Activated naive CD8-positive, alpha-beta T cell treated with anti-CD3 and anti-CD28 coated beads, Interleukin-2, amount 10 ng/mL, durations not matched to agents 7 days and 5 days (primary cell): ENCODE measurements at regions of chr1 and their contacts with region 1.

Region 1: DNA sequence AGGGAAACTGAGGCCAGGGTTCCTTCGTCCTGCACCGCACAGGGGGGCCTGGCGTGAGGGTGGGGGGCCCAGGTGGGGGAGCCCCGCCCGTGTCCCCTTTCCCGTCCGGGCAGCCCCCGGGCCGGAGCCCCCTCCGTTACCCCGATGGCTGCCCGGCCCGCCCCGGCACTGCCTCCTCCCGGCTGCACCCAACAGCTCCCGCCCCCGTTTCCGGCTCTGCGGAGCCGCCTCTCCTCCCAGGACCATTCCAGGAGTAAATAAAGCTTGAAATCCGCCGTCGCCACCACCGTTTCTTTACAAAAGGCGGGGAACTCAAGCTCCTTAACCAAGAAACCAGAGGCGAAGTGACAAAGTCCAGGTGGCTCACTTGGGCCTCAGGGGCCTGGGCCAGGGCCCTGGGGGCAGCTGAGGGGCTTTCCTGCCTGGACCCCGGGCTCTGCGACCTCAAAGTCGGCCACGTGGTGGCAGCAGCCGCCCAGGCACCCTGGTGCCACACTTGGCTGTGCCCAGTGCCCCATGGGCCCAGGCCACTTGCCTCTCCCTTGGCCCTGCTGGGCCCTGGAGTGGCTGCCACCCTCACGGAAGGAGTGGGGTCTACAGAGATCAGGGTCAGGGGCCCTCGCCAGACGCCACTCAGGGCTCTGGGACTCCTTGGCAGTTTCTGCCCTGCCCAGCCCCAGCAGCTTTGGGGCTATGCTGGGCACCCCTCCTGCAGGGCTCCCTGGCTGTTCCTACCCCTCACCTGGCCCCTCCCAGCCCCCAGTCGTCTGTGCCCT is 514 bp upstream of the FAAP20 start:
- DNase-seq: peak; percentile 94
- ATAC-seq: peak; percentile 75
- H3K4me3 Mint-ChIP-seq: peak overlapping the region; percentile 84
- H3K27ac Mint-ChIP-seq: peak overlapping the region; percentile 92
- H3K4me1 Mint-ChIP-seq: peaks cover 18% of the 10 kb centered on the region
- H3K27me3 Mint-ChIP-seq: no peaks in the 10 kb centered on the region

Region 2: GRCh38 chr1:2205191-2205952 is 10.3 kb after region 1 on chr1:
- POLR2A ChIA-PET with region 1: interaction called, 17 read pairs
- DNase-seq: peak; percentile 95
- ATAC-seq: peak; percentile 79
- H3K4me3 Mint-ChIP-seq: peak overlapping the region; percentile 69
- H3K27ac Mint-ChIP-seq: no peak overlapping the region
- H3K4me1 Mint-ChIP-seq: peaks cover 3% of the 10 kb centered on the region
- H3K27me3 Mint-ChIP-seq: no peaks in the 10 kb centered on the region

Region 3: DNA sequence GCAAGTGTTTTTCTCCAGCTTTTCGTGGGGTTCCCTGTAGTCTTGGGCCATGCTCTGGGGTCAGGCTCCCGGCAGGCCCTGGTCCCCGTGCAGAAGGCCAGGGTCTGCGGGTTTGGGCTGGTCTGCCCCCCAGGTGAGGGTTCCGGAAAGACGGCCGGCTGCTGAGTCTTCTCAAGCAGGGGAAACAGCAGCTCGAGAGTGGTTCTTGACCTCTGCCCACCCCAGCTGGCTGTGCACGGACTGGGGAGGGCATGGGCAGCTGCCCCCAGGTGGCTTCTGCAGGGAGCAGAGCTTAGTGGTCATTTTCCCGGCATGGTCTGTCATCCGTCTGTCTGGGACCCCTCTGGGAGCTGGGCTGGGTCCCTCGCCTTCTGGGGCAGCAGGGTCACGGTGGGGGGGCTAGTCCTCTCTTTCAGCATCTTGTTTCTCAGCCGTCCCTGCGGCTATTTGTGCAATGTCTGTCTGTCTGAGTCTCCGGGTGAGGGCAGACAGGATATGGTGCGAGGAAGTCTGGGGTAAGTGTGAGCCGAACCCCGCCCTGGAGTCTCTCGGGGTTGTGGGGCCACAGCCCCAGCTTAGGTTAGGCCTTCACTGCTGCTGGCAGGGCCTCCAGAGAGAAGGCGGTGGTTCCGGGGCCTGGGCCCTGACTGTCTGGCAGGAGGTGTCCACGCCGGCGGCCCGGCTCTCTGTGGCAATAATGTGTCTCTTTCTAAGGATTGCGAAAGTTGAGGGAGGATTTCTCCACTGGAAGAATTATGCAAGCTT is 39.1 kb after region 1 on chr1:
- POLR2A ChIA-PET with region 1: interaction called, 15 read pairs
- DNase-seq: peak; percentile 74
- ATAC-seq: peak; percentile 81
- H3K4me3 Mint-ChIP-seq: peak overlapping the region; percentile 83
- H3K27ac Mint-ChIP-seq: peak overlapping the region; percentile 88
- H3K4me1 Mint-ChIP-seq: peaks cover 55% of the 10 kb centered on the region
- H3K27me3 Mint-ChIP-seq: no peaks in the 10 kb centered on the region

Region 4: GRCh38 chr1:2255420-2256369 is 60.6 kb after region 1 on chr1:
- POLR2A ChIA-PET with region 1: no interaction called
- DNase-seq: peak; percentile 65
- ATAC-seq: peak; percentile 67
- H3K4me3 Mint-ChIP-seq: no peak overlapping the region
- H3K27ac Mint-ChIP-seq: no peak overlapping the region
- H3K4me1 Mint-ChIP-seq: peaks cover 26% of the 10 kb centered on the region
- H3K27me3 Mint-ChIP-seq: no peaks in the 10 kb centered on the region

Region 5: DNA sequence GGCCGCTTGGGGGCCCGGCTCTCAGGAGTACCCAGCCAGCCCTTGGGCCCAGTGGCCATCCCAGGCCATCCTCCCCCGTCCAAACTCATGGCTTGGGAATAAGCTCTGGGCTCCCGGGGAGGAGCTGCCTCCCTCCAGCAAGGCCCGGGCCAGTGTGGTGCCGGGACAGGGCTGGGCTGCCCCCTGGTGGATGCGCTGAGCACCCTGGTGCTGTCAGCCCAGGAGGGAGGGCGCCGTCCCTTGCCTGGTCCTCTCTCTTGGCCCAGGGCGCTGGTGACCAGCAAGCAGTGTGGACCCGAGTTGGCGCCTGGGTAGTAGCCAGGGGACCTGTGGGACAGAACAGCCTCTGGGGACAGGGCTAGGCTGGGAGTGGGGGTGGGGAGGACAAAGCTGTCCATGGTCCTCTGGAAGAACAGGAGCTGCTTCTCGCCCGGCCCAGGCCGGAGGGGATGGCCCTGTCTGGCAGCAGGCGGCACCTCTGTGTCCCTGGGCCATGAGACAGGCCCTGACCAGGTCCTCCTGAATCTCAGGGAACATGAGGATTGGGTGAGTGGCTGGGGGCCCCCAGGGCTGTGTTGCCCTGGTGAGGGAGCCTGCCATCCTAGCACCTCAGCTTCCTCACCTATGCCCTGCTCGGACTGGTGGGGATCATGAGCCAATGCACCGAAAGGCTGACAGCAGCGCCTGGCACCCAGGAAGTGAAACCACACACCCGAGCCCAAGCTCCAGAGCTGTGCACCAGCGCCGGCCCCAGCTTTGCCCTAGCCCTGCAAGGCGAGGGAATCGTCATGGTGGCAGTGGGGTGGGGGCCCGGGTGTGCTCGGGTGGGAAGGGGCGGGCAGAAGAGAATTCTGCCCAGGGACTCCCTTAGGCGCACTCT is 186.9 kb after region 1 on chr1:
- POLR2A ChIA-PET with region 1: interaction called, 63 read pairs
- DNase-seq: peak; percentile 88
- ATAC-seq: peak; percentile 94
- H3K4me3 Mint-ChIP-seq: no peak overlapping the region
- H3K27ac Mint-ChIP-seq: no peak overlapping the region
- H3K4me1 Mint-ChIP-seq: no peaks in the 10 kb centered on the region
- H3K27me3 Mint-ChIP-seq: no peaks in the 10 kb centered on the region

Region 6: DNA sequence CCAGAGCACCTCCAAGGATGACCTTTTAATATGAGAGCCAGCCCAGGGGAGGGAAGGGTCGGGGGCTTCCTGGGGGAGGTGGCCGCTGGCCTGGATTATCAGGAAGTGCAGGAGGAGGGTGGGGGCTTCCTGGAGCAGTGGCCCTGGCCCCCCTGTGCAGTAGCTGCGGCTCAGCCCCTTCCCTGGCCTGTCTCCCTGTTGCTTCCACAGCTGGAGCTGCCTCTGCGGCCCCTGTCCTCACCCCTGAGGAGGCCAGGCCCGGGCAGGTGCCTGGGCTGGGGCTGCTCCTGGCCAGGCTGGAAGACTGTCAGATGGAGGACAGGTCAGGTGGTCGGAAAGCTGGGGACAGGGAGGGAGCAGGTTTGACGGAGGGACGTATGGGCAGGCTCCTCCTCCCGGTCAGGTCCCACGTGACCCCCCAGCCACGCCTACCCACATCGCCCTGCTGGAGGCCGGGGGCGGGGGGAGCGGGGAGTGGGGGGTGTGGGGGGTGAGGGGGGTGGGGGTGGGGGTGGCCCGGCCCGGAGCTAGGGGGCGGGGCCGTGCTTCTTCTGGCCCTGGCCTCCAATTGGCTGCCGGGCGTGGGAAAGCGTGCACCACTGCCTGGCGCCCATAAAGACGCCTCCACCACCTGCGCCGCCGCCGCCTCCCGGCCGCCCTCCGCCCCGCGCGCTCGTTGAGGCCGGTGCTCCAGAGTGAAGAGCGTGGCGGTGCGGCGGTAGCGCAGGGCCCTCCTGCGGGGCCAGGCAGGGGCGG is 350.9 kb after region 1 on chr1:
- POLR2A ChIA-PET with region 1: interaction called, 13 read pairs
- DNase-seq: peak; percentile 91
- ATAC-seq: peak; percentile 37
- H3K4me3 Mint-ChIP-seq: peak overlapping the region; percentile 91
- H3K27ac Mint-ChIP-seq: peak overlapping the region; percentile 96
- H3K4me1 Mint-ChIP-seq: peaks cover 9% of the 10 kb centered on the region
- H3K27me3 Mint-ChIP-seq: peaks cover 5% of the 10 kb centered on the region